GM13977 (cell line): ENCODE measurements at regions of chr6 and their contacts with region 1.

Region 1: GRCh38 chr6:3277851-3278416 is 19.2 kb downstream of the PSMG4 start:
- DNase-seq: no peak
- CTCF ChIP-seq: no peak

Region 2: GRCh38 chr6:3732345-3733141 is 454.6 kb after region 1 on chr6:
- in situ Hi-C with region 1: loop called (anchors 10 kb)
- DNase-seq: peak; percentile 75
- CTCF ChIP-seq: peak; percentile 86